GM10248 (cell line): ENCODE measurements at regions of chr9 and their contacts with region 1.

Region 1: DNA sequence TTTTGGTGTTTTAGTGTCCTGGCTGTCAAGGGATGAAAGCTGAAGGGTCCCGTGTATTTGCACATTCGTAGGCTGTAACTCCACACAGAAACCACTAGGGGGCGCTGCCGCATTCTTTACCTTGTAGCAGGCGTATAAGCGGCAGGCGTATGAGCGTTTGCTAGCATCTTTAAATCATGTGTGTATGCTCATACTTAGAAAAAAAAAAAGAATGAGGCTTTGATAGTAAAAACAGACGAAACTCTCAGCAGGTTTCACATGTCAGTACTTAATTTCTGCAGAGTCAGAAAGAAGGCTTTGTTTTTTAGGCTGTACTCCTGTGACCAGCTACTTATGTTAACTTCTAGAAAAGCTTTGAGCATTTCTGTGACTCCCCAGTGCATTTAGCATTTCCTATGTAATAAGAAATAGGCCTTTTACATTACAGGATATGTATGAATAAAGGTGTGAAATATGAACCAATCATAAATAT is 218.8 kb upstream of the ADAMTSL1 start:
- DNase-seq: peak; percentile 60
- CTCF ChIP-seq: peak; percentile 82

Region 2: GRCh38 chr9:18229992-18230676 is 25.1 kb before region 1 on chr9:
- CTCF ChIA-PET with region 1: interaction called, 17 read pairs
- POLR2A ChIA-PET with region 1: no interaction called
- DNase-seq: no peak
- CTCF ChIP-seq: no peak

Region 3: GRCh38 chr9:18268381-18268780 is 13.2 kb after region 1 on chr9:
- CTCF ChIA-PET with region 1: interaction called, 46 read pairs
- POLR2A ChIA-PET with region 1: no interaction called
- DNase-seq: no peak
- CTCF ChIP-seq: no peak

Region 4: DNA sequence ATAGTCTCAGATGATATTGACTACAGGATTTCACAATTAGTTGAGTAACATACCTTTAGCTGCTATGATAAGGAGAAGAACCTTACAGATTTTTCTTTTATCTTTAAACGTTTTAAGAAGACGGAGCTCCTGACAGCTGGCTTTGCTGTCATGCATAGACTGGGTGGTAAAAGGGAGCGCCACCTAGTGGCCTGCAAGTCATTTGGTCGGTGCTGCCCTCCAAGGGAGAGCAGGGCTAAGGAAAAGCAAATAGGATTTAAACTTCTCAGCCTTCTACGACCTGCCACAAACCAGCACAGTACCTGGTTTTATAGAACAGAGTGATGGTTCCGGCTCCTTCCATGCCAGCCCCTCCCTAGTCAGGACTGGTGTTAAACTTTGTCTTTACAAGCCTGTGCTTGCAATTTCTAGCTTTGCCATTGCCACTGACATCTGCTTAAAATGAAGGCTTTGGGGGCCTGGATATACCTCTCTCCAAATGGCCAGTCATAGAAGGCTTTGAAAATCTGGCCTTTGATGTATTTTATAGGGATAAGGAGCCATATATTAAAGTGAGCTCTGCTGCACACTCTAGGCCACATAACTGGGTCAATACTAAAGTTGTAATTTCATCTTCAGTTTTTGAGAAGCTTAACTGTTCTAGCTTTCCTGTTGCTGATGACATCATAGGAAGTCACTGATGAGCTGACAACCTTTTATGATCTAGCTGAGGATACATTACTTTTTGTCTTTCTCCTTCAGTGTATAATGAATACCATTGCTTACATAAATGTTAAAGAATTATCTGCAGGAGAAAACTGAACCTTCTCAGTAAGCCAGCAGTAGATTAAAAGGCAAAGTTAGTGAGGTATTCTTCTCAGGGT is 187.7 kb after region 1 on chr9:
- CTCF ChIA-PET with region 1: interaction called, 78 read pairs
- POLR2A ChIA-PET with region 1: no interaction called
- DNase-seq: peak; percentile 56
- CTCF ChIP-seq: peak; percentile 86

Region 5: GRCh38 chr9:19028835-19029451 is 773.7 kb after region 1 on chr9:
- CTCF ChIA-PET with region 1: interaction called, 50 read pairs
- POLR2A ChIA-PET with region 1: no interaction called
- DNase-seq: peak; percentile 76
- CTCF ChIP-seq: peak; percentile 63